ENCODE measurements at regions of chr21 and their contacts with region 1.

Region 1: DNA sequence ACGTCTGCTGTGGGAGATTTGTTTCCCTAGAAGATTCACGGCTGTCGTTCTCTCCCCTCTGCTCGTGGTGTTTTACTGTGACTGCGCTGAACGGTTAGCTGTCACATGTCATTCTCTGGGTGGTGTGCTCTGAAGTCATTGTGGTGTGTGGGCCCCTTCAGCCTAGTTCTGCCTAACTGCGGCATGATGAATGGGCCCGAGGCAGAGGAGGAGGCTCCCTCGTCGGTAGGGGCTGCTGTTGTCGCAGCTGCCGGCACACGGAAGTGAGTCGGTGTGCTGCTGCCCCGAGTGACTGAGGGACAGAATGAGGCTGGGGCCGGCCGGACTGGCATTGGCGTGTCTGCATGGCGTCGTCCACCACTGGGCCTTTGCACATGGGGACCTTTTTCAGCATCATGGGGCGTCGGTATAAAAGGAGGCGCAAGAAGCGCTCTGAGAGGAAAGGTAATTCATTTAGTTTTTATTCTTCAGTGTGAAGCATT is 77.9 kb downstream of the ADARB1 start:
- DNase-seq: peak; percentile 47 to 88 (median 73)
- ATAC-seq: peak; percentile 95
- H3K4me3 ChIP-seq: no peak overlapping the region
- H3K4me3 Mint-ChIP-seq: peak overlapping the region; percentile 70
- H3K27ac ChIP-seq: peak overlapping the region; percentile 11 to 21
- H3K27ac Mint-ChIP-seq: peak overlapping the region; percentile 79
- H3K4me1 ChIP-seq: peaks cover 39% of the 10 kb centered on the region
- H3K4me1 Mint-ChIP-seq: peaks cover 35% of the 10 kb centered on the region
- H3K27me3 ChIP-seq: no peaks in the 10 kb centered on the region
- H3K27me3 Mint-ChIP-seq: no peaks in the 10 kb centered on the region
- CTCF ChIP-seq: peak; percentile 54

Region 2: GRCh38 chr21:44466351-44466954 is 685.9 kb before region 1 on chr21:
- CTCF ChIA-PET with region 1: no interaction called
- POLR2A ChIA-PET with region 1: no interaction called
- intact Hi-C with region 1: no loop called
- DNase-seq: no peak
- ATAC-seq: no peak
- H3K4me3 ChIP-seq: no peak overlapping the region
- H3K4me3 Mint-ChIP-seq: no peak overlapping the region
- H3K27ac ChIP-seq: no peak overlapping the region
- H3K27ac Mint-ChIP-seq: no peak overlapping the region
- H3K4me1 ChIP-seq: no peaks in the 10 kb centered on the region
- H3K4me1 Mint-ChIP-seq: no peaks in the 10 kb centered on the region
- H3K27me3 ChIP-seq: peaks cover 0 to 3% of the 10 kb centered on the region in 2 experiments
- H3K27me3 Mint-ChIP-seq: no peaks in the 10 kb centered on the region
- CTCF ChIP-seq: no peak

Region 3: DNA sequence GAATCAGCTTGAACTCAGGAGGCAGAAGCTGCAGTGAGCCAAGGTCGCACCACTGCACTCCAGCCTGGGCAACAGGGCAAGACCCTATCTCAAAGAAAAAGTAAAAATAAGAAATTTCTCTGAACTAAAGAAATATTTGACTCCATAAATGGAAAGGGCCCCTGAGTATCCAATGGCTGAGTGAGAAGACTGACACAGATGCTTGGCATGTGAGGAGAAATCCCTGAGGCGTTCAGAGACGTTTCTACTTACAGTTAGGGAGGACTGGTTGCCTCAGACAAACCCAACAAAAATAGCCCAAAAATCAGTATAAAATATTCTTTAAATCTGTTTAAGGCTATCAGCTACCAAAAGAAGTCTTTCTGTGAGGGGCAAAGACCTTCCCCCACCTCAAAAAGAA is 331.5 kb before region 1 on chr21:
- CTCF ChIA-PET with region 1: no interaction called
- POLR2A ChIA-PET with region 1: no interaction called
- intact Hi-C with region 1: no loop called
- DNase-seq: no peak
- ATAC-seq: no peak
- H3K4me3 ChIP-seq: no peak overlapping the region
- H3K4me3 Mint-ChIP-seq: no peak overlapping the region
- H3K27ac ChIP-seq: no peak overlapping the region
- H3K27ac Mint-ChIP-seq: no peak overlapping the region
- H3K4me1 ChIP-seq: peaks cover 18% of the 10 kb centered on the region
- H3K4me1 Mint-ChIP-seq: peaks cover 7% of the 10 kb centered on the region
- H3K27me3 ChIP-seq: no peaks in the 10 kb centered on the region
- H3K27me3 Mint-ChIP-seq: no peaks in the 10 kb centered on the region
- CTCF ChIP-seq: no peak

Region 4: GRCh38 chr21:45209685-45210284 is 57.5 kb after region 1 on chr21:
- CTCF ChIA-PET with region 1: no interaction called
- POLR2A ChIA-PET with region 1: no interaction called
- intact Hi-C with region 1: loop called in 1 of 2 experiments (anchors 10 kb)
- DNase-seq: no peak
- ATAC-seq: no peak
- H3K4me3 ChIP-seq: no peak overlapping the region
- H3K4me3 Mint-ChIP-seq: no peak overlapping the region
- H3K27ac ChIP-seq: no peak overlapping the region
- H3K27ac Mint-ChIP-seq: no peak overlapping the region
- H3K4me1 ChIP-seq: no peaks in the 10 kb centered on the region
- H3K4me1 Mint-ChIP-seq: peaks cover 11% of the 10 kb centered on the region
- H3K27me3 ChIP-seq: no peaks in the 10 kb centered on the region
- H3K27me3 Mint-ChIP-seq: no peaks in the 10 kb centered on the region
- CTCF ChIP-seq: no peak

Region 5: DNA sequence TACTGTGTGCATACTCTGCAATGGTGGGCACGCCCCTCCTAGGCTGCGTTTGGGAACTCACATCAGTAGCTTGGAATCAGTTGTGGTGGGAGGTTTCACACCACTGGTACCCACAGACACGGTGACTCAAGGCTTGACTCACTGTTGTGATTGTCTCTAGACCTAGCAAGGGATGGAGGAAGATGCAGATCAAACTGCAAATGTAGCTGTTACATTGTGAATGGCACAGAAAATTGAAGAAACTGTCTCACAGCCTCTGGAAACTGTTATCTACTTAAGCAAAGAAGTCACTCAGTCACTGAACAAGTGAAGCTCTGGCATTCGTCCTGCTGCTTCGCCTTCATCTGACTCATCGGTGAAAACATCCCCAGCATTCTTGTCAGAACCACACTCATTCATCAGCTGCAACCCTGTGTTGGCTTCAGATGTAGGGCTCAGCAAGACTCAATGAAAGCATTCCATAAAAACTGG is 75.9 kb after region 1 on chr21:
- CTCF ChIA-PET with region 1: interaction called, 4 read pairs
- POLR2A ChIA-PET with region 1: no interaction called
- intact Hi-C with region 1: loop called in 1 of 2 experiments (anchors 5 kb)
- DNase-seq: peak; percentile 53 to 95 (median 73)
- ATAC-seq: peak; percentile 65
- H3K4me3 ChIP-seq: no peak overlapping the region
- H3K4me3 Mint-ChIP-seq: no peak overlapping the region
- H3K27ac ChIP-seq: peak overlapping the region in 1 of 2 experiments; percentile 48
- H3K27ac Mint-ChIP-seq: peak overlapping the region; percentile 85
- H3K4me1 ChIP-seq: peaks cover 25% of the 10 kb centered on the region
- H3K4me1 Mint-ChIP-seq: peaks cover 36% of the 10 kb centered on the region
- H3K27me3 ChIP-seq: peaks cover 0 to 2% of the 10 kb centered on the region in 2 experiments
- H3K27me3 Mint-ChIP-seq: no peaks in the 10 kb centered on the region
- CTCF ChIP-seq: no peak